ENCODE measurements at regions of chr3 and their contacts with region 1.

Region 1: GRCh38 chr3:176172430-176172954 is 1024.8 kb downstream of the TBL1XR1 start:
- DNase-seq: no peak
- ATAC-seq: no peak
- H3K4me3 ChIP-seq: no peak overlapping the region
- H3K27ac ChIP-seq: no peak overlapping the region
- H3K4me1 ChIP-seq: no peaks in the 10 kb centered on the region
- H3K27me3 ChIP-seq: no peaks in the 10 kb centered on the region
- CTCF ChIP-seq: no peak
- POLR2A ChIP-seq: no peak
- RAD21 ChIP-seq: no peak

Region 2: DNA sequence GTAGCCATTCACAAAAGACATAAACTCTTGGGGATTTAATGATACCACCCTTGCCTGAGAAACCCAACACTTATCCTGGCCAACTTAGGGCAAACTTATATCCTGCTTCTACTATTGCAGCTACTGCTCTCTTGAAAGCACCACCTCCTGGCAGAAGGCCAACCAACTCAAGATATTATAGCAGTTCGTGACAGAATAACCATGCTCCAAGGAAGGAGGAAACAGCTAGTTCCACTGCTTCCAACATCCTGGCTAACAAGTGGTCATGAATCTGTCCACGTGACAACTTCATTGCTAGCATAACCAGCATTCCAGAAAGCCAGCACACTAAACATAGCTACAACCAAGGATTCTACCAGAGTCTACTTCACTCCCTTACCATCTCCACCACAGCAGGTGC is 12.7 kb before region 1 on chr3:
- CTCF ChIA-PET with region 1: no interaction called
- POLR2A ChIA-PET with region 1: no interaction called
- dilution Hi-C with region 1: no loop called
- in situ Hi-C with region 1: no loop called
- intact Hi-C with region 1: loop called (anchors 1 kb)
- DNase-seq: peak; percentile 28
- ATAC-seq: no peak; the same call in 1 of the 2 replicates
- H3K4me3 ChIP-seq: no peak overlapping the region
- H3K27ac ChIP-seq: no peak overlapping the region
- H3K4me1 ChIP-seq: no peaks in the 10 kb centered on the region
- H3K27me3 ChIP-seq: no peaks in the 10 kb centered on the region
- CTCF ChIP-seq: no peak
- POLR2A ChIP-seq: no peak
- RAD21 ChIP-seq: no peak

Region 3: DNA sequence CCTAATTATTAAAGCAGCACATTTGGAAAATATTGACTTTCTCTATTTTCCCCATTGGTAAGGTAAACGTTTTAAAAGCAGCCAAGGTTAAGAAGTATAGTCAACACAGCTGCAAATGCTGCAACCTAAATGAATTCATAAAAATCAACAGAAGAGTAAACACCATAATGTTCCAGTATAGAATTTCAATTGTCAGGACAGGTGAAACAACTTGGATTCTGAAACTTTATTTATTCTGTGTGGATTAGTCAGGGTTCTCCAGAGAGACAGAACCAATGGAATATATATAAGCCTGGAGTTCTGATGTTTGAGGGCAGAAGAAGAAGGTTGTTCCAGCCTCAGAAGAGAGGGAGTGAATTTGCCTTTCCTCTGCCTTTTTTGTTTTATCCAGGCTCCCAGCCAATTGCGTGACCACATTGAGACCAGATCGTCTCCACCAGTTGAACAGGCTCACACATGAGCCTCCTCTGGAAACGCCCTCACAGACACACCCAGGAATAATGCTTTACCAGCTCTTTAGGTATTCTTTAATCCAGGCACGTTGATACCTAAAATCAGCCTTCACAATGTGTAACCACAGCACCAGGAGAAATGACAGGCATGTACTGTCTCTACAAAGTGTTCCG is 101.6 kb after region 1 on chr3:
- CTCF ChIA-PET with region 1: no interaction called
- POLR2A ChIA-PET with region 1: no interaction called
- dilution Hi-C with region 1: no loop called
- in situ Hi-C with region 1: no loop called
- intact Hi-C with region 1: no loop called
- DNase-seq: no peak
- ATAC-seq: no peak
- H3K4me3 ChIP-seq: no peak overlapping the region
- H3K27ac ChIP-seq: no peak overlapping the region
- H3K4me1 ChIP-seq: no peaks in the 10 kb centered on the region
- H3K27me3 ChIP-seq: no peaks in the 10 kb centered on the region
- CTCF ChIP-seq: no peak
- POLR2A ChIP-seq: no peak
- RAD21 ChIP-seq: no peak

Measured in IMR-90 (cell line).